Breast epithelium (tissue), 4 donors: ENCODE measurements at regions of chr2 and their contacts with region 1.

Region 1: GRCh38 chr2:25951071-25951547 is 31.2 kb downstream of the KIF3C start:
- DNase-seq: peak; percentile 37 to 76
- H3K4me3 ChIP-seq: no peak overlapping the region
- H3K27ac ChIP-seq: no peak overlapping the region
- H3K4me1 ChIP-seq: no peaks in the 10 kb centered on the region
- H3K27me3 ChIP-seq: no peaks in the 10 kb centered on the region
- CTCF ChIP-seq: peak; percentile 84 to 94 (median 89)
- POLR2A ChIP-seq: no peak

Region 2: GRCh38 chr2:25243995-25244394 is 707.1 kb before region 1 on chr2:
- intact Hi-C with region 1: no loop called
- DNase-seq: no peak
- H3K4me3 ChIP-seq: no peak overlapping the region
- H3K27ac ChIP-seq: no peak overlapping the region
- H3K4me1 ChIP-seq: no peaks in the 10 kb centered on the region
- H3K27me3 ChIP-seq: no peaks in the 10 kb centered on the region
- CTCF ChIP-seq: no peak
- POLR2A ChIP-seq: no peak

Region 3: DNA sequence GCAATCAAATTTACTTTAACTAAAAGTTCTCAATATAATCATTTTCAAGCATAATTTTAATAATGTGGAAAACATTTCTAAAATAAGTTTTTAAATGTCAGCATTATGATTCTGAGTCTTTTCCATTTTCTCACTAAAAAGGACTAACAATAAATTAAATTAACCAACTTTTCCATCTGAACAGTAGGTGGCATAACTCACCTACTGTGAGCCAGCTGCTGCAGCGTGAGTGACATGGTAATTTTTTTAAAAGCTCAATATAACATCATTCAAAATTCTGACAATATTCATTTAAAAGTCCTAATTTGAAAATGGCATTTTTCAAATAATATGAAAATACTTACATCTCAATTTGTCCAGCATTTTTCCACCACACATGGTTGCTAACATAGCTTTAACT is 344.2 kb before region 1 on chr2:
- intact Hi-C with region 1: loop called (anchors 5 kb)
- DNase-seq: no peak
- H3K4me3 ChIP-seq: no peak overlapping the region
- H3K27ac ChIP-seq: no peak overlapping the region
- H3K4me1 ChIP-seq: no peaks in the 10 kb centered on the region
- H3K27me3 ChIP-seq: no peaks in the 10 kb centered on the region
- CTCF ChIP-seq: peak in 2 of 3 donors; percentile 55 to 62
- POLR2A ChIP-seq: no peak